MCF 10A (cell line): ENCODE measurements at regions of chr4 and their contacts with region 1.

Region 1: GRCh38 chr4:10006231-10006600 is 15.1 kb downstream of the SLC2A9 start:
- DNase-seq: peak; percentile 96
- H3K4me3 Mint-ChIP-seq: peak overlapping the region; percentile 55
- H3K27ac Mint-ChIP-seq: peak overlapping the region; percentile 82
- H3K4me1 Mint-ChIP-seq: peaks cover 44% of the 10 kb centered on the region
- H3K27me3 Mint-ChIP-seq: no peaks in the 10 kb centered on the region
- CTCF ChIP-seq: no peak

Region 2: DNA sequence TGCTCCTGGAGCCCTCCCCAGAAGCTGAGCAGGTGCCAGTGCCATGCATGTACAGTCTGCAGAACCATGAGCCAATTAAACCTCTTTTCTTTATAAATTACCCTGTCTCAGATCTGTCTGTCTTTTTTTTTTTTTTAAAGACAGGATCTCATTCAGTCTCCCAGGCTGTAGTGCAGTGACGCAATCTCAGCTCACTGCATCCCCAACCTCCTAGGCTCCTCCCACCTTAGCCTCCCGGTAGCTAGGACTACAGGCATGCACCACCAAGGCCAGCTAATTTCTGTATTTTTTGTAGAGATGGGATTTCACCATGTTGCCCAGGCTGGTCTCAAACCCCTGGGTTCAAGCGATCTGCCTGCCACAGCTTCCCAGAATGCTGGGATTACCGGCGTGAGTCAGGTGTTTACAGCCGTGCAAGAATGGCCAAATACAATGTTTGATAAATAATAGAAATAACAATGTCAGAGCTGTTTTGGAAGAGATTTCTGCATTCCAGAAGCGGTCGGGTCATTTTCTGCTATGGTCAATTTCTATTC is 53.7 kb before region 1 on chr4:
- CTCF ChIA-PET with region 1: no interaction called
- POLR2A ChIA-PET with region 1: no interaction called
- intact Hi-C with region 1: loop called (anchors 5 kb)
- DNase-seq: peak; percentile 46
- H3K4me3 Mint-ChIP-seq: no peak overlapping the region
- H3K27ac Mint-ChIP-seq: no peak overlapping the region
- H3K4me1 Mint-ChIP-seq: peaks cover 5% of the 10 kb centered on the region
- H3K27me3 Mint-ChIP-seq: no peaks in the 10 kb centered on the region
- CTCF ChIP-seq: no peak